Tibial artery (tissue), 4 donors: ENCODE measurements at regions of chr5 and their contacts with region 1.

Region 1: GRCh38 chr5:92147266-92147665 is 764.1 kb upstream of the ARRDC3 start:
- DNase-seq: no peak
- H3K4me3 ChIP-seq: no peak overlapping the region
- H3K27ac ChIP-seq: no peak overlapping the region
- H3K4me1 ChIP-seq: no peaks in the 10 kb centered on the region
- H3K27me3 ChIP-seq: no peaks in the 10 kb centered on the region
- CTCF ChIP-seq: no peak

Region 2: GRCh38 chr5:90201923-90202322 is 1945.3 kb before region 1 on chr5:
- intact Hi-C with region 1: loop called (anchors 10 kb)
- DNase-seq: no peak
- H3K4me3 ChIP-seq: no peak overlapping the region
- H3K27ac ChIP-seq: no peak overlapping the region
- H3K4me1 ChIP-seq: no peaks in the 10 kb centered on the region
- H3K27me3 ChIP-seq: no peaks in the 10 kb centered on the region
- CTCF ChIP-seq: no peak